ENCODE measurements at regions of chr6 and their contacts with region 1.

Region 1: GRCh38 chr6:11722805-11723631 is 55.6 kb downstream of the ADTRP start:
- DNase-seq: no peak
- ATAC-seq: peak; percentile 78
- H3K4me3 ChIP-seq: peak overlapping the region; percentile 63
- H3K27ac ChIP-seq: peak overlapping the region; percentile 88
- H3K4me1 ChIP-seq: peaks cover 8% of the 10 kb centered on the region
- H3K27me3 ChIP-seq: no peaks in the 10 kb centered on the region
- CTCF ChIP-seq: no peak
- EP300 ChIP-seq: no peak
- POLR2A ChIP-seq: no peak; the same call in 1 of the 2 replicates
- RAD21 ChIP-seq: 0 out of 2 replicates have a peak, but pooled peaks have one; percentile 4

Region 2: GRCh38 chr6:11700118-11700718 is 22.8 kb before region 1 on chr6:
- CTCF ChIA-PET with region 1: interaction called, 8 read pairs
- POLR2A ChIA-PET with region 1: no interaction called
- RAD21 ChIA-PET with region 1: interaction called, 21 read pairs
- SMC1A ChIA-PET with region 1: interaction called, 39 read pairs
- in situ Hi-C with region 1: no loop called
- intact Hi-C with region 1: no loop called
- DNase-seq: no peak
- ATAC-seq: peak; percentile 70
- H3K4me3 ChIP-seq: no peak overlapping the region
- H3K27ac ChIP-seq: no peak overlapping the region
- H3K4me1 ChIP-seq: peaks cover 4% of the 10 kb centered on the region
- H3K27me3 ChIP-seq: no peaks in the 10 kb centered on the region
- CTCF ChIP-seq: peak; percentile 35 to 50 (median 35); a peak in 3 of 6 replicates
- EP300 ChIP-seq: no peak
- POLR2A ChIP-seq: no peak
- RAD21 ChIP-seq: peak; percentile 82

Region 3: GRCh38 chr6:11824986-11825385 is 102.0 kb after region 1 on chr6:
- CTCF ChIA-PET with region 1: interaction called, 6 read pairs
- POLR2A ChIA-PET with region 1: interaction called, 3 read pairs
- RAD21 ChIA-PET with region 1: interaction called, 26 read pairs
- SMC1A ChIA-PET with region 1: interaction called, 40 read pairs
- in situ Hi-C with region 1: no loop called
- intact Hi-C with region 1: no loop called
- DNase-seq: peak; percentile 91
- ATAC-seq: peak; percentile 86
- H3K4me3 ChIP-seq: no peak overlapping the region
- H3K27ac ChIP-seq: peak overlapping the region; percentile 70
- H3K4me1 ChIP-seq: peaks cover 47% of the 10 kb centered on the region
- H3K27me3 ChIP-seq: no peaks in the 10 kb centered on the region
- CTCF ChIP-seq: no peak
- EP300 ChIP-seq: peak; percentile 90; a peak in 3 of 4 replicates
- POLR2A ChIP-seq: no peak
- RAD21 ChIP-seq: peak; percentile 14

Region 4: GRCh38 chr6:11833626-11834592 is 110.9 kb after region 1 on chr6:
- CTCF ChIA-PET with region 1: interaction called, 6 read pairs
- POLR2A ChIA-PET with region 1: interaction called, 5 read pairs
- RAD21 ChIA-PET with region 1: interaction called, 26 read pairs
- SMC1A ChIA-PET with region 1: interaction called, 35 read pairs
- in situ Hi-C with region 1: no loop called
- intact Hi-C with region 1: no loop called
- DNase-seq: peak; percentile 84
- ATAC-seq: peak; percentile 84
- H3K4me3 ChIP-seq: peak overlapping the region; percentile 0; the same call in 1 of the 2 replicates
- H3K27ac ChIP-seq: peak overlapping the region; percentile 95
- H3K4me1 ChIP-seq: peaks cover 45% of the 10 kb centered on the region
- H3K27me3 ChIP-seq: no peaks in the 10 kb centered on the region
- CTCF ChIP-seq: no peak
- EP300 ChIP-seq: peak; percentile 97 to 100
- POLR2A ChIP-seq: peak; percentile 41; the same call in 1 of the 2 replicates
- RAD21 ChIP-seq: peak; percentile 42; the same call in 1 of the 2 replicates

Region 5: DNA sequence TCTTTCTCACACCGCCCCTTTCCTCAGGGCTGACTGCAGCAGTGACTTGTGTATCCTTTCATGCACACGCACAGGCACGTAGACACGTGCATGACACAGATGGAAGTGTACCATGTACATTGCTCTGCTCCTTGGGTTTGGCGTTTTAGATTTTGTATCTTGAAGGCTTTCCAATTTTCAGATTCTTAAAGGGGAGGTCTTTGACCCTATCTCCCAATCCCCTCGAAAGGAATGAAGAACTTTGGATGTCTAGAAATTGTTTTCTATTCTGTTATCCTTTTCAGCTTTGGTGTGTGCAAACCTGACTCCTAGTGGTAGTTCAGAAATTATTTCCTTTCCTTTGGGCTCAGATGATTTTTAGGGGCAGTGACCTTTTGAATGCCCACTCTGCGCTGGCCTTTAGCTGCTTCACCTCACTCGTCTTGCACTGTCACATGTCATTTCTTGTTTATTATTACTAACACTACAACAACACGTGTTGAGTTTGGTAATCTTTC is 352.1 kb after region 1 on chr6:
- CTCF ChIA-PET with region 1: interaction called, 5 read pairs
- POLR2A ChIA-PET with region 1: interaction called, 3 read pairs
- RAD21 ChIA-PET with region 1: interaction called, 4 read pairs
- SMC1A ChIA-PET with region 1: interaction called, 14 read pairs
- in situ Hi-C with region 1: no loop called
- intact Hi-C with region 1: no loop called
- DNase-seq: no peak
- ATAC-seq: peak; percentile 63
- H3K4me3 ChIP-seq: no peak overlapping the region
- H3K27ac ChIP-seq: no peak overlapping the region
- H3K4me1 ChIP-seq: peaks cover 3% of the 10 kb centered on the region
- H3K27me3 ChIP-seq: no peaks in the 10 kb centered on the region
- CTCF ChIP-seq: peak; percentile 30 to 53 (median 40); a peak in 4 of 6 replicates
- EP300 ChIP-seq: no peak
- POLR2A ChIP-seq: no peak
- RAD21 ChIP-seq: peak; percentile 65

Measured in GM12878 (cell line).